CD8-positive, alpha-beta T cell (primary cell): ENCODE measurements at regions of chr1 and their contacts with region 1.

Region 1: GRCh38 chr1:25608488-25609178 is 8.0 kb upstream of the MAN1C1 start:
- DNase-seq: peak; percentile 63 to 93 (median 90)
- ATAC-seq: peak; percentile 99
- H3K4me3 ChIP-seq: no peak overlapping the region
- H3K4me3 Mint-ChIP-seq: no peak overlapping the region
- H3K27ac ChIP-seq: no peak overlapping the region
- H3K27ac Mint-ChIP-seq: no peak overlapping the region
- H3K4me1 ChIP-seq: peaks cover 3% of the 10 kb centered on the region
- H3K4me1 Mint-ChIP-seq: peaks cover 12% of the 10 kb centered on the region
- H3K27me3 ChIP-seq: no peaks in the 10 kb centered on the region
- H3K27me3 Mint-ChIP-seq: no peaks in the 10 kb centered on the region
- CTCF ChIP-seq: no peak

Region 2: GRCh38 chr1:25664357-25665199 is 55.9 kb after region 1 on chr1:
- CTCF ChIA-PET with region 1: no interaction called
- POLR2A ChIA-PET with region 1: no interaction called
- intact Hi-C with region 1: no loop called
- DNase-seq: no peak
- ATAC-seq: no peak
- H3K4me3 ChIP-seq: no peak overlapping the region
- H3K4me3 Mint-ChIP-seq: no peak overlapping the region
- H3K27ac ChIP-seq: no peak overlapping the region
- H3K27ac Mint-ChIP-seq: no peak overlapping the region
- H3K4me1 ChIP-seq: peaks cover 43% of the 10 kb centered on the region
- H3K4me1 Mint-ChIP-seq: peaks cover 69% of the 10 kb centered on the region
- H3K27me3 ChIP-seq: no peaks in the 10 kb centered on the region
- H3K27me3 Mint-ChIP-seq: no peaks in the 10 kb centered on the region
- CTCF ChIP-seq: no peak

Region 3: GRCh38 chr1:25802915-25803314 is 194.3 kb after region 1 on chr1:
- CTCF ChIA-PET with region 1: interaction called, 135 read pairs
- POLR2A ChIA-PET with region 1: interaction called, 8 read pairs
- intact Hi-C with region 1: no loop called
- DNase-seq: peak in 1 of 9 experiments; percentile 36
- ATAC-seq: no peak
- H3K4me3 ChIP-seq: no peak overlapping the region
- H3K4me3 Mint-ChIP-seq: peak overlapping the region; percentile 16
- H3K27ac ChIP-seq: no peak overlapping the region
- H3K27ac Mint-ChIP-seq: peak overlapping the region; percentile 16
- H3K4me1 ChIP-seq: peaks cover 42% of the 10 kb centered on the region
- H3K4me1 Mint-ChIP-seq: peaks cover 56% of the 10 kb centered on the region
- H3K27me3 ChIP-seq: no peaks in the 10 kb centered on the region
- H3K27me3 Mint-ChIP-seq: no peaks in the 10 kb centered on the region
- CTCF ChIP-seq: no peak